ENCODE measurements at regions of chr4 and their contacts with region 1.

Region 1: DNA sequence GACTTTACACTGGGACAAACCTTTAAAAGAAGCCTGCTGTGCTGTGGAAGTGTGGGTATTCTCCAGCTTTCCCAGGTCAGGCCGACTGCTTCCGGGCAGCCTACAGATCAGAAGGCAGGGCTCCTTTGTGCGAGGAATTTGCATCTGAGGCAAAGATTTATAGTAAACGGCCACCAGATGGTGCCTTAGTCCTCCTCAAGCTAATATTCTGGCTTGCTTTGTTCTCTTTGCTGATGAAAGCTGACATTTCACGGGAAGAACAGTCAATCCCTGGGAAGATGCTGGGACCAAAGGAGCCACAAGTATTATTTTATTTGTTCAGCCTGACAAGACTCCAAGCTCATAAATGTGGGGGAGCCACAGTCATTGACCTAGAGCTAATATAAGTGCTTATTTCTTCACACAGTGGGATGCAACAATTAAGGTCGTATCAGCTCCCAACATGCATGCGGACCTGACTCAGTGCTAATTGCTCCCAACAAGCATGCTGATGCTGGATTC is 120.7 kb upstream of the TRIM2 start:
- DNase-seq: peak in 8 of 9 experiments; percentile 14 to 82 (median 47)
- ATAC-seq: peak; percentile 42
- H3K4me3 ChIP-seq: no peak overlapping the region
- H3K4me3 Mint-ChIP-seq: no peak overlapping the region
- H3K27ac ChIP-seq: no peak overlapping the region
- H3K27ac Mint-ChIP-seq: no peak overlapping the region
- H3K4me1 ChIP-seq: peaks cover 57% of the 10 kb centered on the region
- H3K4me1 Mint-ChIP-seq: peaks cover 46% of the 10 kb centered on the region
- H3K27me3 ChIP-seq: no peaks in the 10 kb centered on the region
- H3K27me3 Mint-ChIP-seq: no peaks in the 10 kb centered on the region
- CTCF ChIP-seq: peak; percentile 77

Region 2: DNA sequence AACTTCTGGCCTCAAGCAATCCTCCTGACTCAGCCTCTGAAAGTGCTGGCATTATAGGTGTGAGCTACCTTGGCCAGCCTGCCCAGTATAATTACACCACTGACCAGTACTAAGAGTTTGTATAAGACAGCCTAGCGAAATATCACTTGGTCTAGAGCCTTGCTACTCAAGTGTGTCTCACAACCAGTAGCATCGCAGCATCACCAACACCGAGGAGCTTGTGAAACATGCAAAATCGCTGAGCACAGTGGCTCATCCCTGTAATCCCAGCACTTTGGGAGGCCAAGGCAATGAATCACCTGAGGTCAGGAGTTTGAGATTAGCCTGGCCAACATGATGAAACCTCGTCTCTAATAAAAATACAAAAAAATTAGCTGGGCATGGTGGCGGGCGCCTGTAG is 1220.7 kb before region 1 on chr4:
- CTCF ChIA-PET with region 1: no interaction called
- POLR2A ChIA-PET with region 1: no interaction called
- intact Hi-C with region 1: no loop called
- DNase-seq: no peak
- ATAC-seq: no peak
- H3K4me3 ChIP-seq: no peak overlapping the region
- H3K4me3 Mint-ChIP-seq: no peak overlapping the region
- H3K27ac ChIP-seq: no peak overlapping the region
- H3K27ac Mint-ChIP-seq: no peak overlapping the region
- H3K4me1 ChIP-seq: no peaks in the 10 kb centered on the region
- H3K4me1 Mint-ChIP-seq: peaks cover 12% of the 10 kb centered on the region
- H3K27me3 ChIP-seq: no peaks in the 10 kb centered on the region
- H3K27me3 Mint-ChIP-seq: no peaks in the 10 kb centered on the region
- CTCF ChIP-seq: no peak

Region 3: DNA sequence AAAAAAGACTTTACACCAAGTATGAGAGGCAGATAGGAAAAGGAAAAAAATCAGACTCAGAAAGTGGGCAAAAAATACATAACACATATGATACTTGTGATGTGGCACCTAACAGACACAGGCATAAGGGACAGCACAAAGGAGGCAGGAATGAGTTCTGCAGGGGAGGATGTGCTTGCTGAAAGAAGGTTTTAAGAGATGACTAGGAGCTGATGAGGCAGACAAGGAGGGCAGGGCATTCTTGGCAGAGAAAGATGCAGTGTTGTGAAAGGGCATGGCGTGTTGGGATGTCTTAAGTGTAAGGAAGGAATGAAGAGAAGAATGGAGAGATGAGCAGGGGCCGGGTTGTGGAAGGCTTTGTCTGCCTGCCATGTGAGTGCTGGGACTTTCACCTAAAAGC is 354.0 kb before region 1 on chr4:
- CTCF ChIA-PET with region 1: no interaction called
- POLR2A ChIA-PET with region 1: no interaction called
- intact Hi-C with region 1: no loop called
- DNase-seq: no peak
- ATAC-seq: no peak
- H3K4me3 ChIP-seq: no peak overlapping the region
- H3K4me3 Mint-ChIP-seq: no peak overlapping the region
- H3K27ac ChIP-seq: no peak overlapping the region
- H3K27ac Mint-ChIP-seq: no peak overlapping the region
- H3K4me1 ChIP-seq: no peaks in the 10 kb centered on the region
- H3K4me1 Mint-ChIP-seq: no peaks in the 10 kb centered on the region
- H3K27me3 ChIP-seq: no peaks in the 10 kb centered on the region
- H3K27me3 Mint-ChIP-seq: peaks cover 2% of the 10 kb centered on the region
- CTCF ChIP-seq: no peak

Region 4: GRCh38 chr4:152850377-152850776 is 233.1 kb before region 1 on chr4:
- CTCF ChIA-PET with region 1: interaction called, 67 read pairs
- POLR2A ChIA-PET with region 1: interaction called, 4 read pairs
- intact Hi-C with region 1: loop called (anchors 1 kb)
- DNase-seq: peak in 7 of 9 experiments; percentile 18 to 57 (median 33)
- ATAC-seq: peak; percentile 69
- H3K4me3 ChIP-seq: no peak overlapping the region
- H3K4me3 Mint-ChIP-seq: no peak overlapping the region
- H3K27ac ChIP-seq: no peak overlapping the region
- H3K27ac Mint-ChIP-seq: no peak overlapping the region
- H3K4me1 ChIP-seq: peaks cover 4% of the 10 kb centered on the region
- H3K4me1 Mint-ChIP-seq: peaks cover 24% of the 10 kb centered on the region
- H3K27me3 ChIP-seq: no peaks in the 10 kb centered on the region
- H3K27me3 Mint-ChIP-seq: no peaks in the 10 kb centered on the region
- CTCF ChIP-seq: no peak

Region 5: DNA sequence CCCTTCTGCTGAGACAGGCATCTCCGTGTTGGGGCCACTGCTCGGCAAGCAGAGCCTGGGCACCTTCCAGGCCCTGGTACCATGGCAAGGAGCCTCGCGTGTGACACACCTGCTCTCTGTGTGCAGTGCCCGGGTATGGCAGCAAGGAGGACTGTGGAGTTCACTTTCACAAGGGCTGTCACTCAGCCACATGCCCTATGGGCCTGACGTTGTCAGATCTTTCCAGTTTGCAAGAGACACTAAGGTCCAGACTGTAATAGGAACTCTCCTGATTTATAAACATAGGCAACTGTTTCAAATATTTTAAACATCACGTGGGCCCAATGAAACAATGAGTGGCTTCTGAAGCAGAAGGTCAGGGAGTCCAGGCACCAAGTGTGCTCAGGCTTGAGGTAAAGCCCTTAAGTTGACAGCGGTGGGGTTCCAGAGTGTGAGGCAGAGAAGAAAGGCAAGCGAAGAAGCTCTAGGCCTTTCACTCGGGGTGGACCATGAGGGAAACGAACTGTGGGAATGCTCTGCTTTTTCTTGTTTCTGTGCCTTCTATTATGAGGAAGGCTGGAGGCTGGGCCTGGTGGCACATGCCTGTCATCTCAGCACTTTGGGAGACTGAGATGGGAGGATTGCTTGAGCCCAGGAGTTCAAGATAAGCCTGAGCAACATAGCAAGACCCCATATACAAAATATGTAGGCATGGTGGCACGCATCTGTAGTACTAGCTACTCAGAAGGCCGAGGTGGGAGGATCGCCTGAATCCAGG is 12.1 kb after region 1 on chr4:
- CTCF ChIA-PET with region 1: interaction called, 107 read pairs
- POLR2A ChIA-PET with region 1: interaction called, 3 read pairs
- intact Hi-C with region 1: no loop called
- DNase-seq: no peak
- ATAC-seq: no peak
- H3K4me3 ChIP-seq: no peak overlapping the region
- H3K4me3 Mint-ChIP-seq: no peak overlapping the region
- H3K27ac ChIP-seq: no peak overlapping the region
- H3K27ac Mint-ChIP-seq: no peak overlapping the region
- H3K4me1 ChIP-seq: peaks cover 4% of the 10 kb centered on the region
- H3K4me1 Mint-ChIP-seq: peaks cover 4% of the 10 kb centered on the region
- H3K27me3 ChIP-seq: no peaks in the 10 kb centered on the region
- H3K27me3 Mint-ChIP-seq: no peaks in the 10 kb centered on the region
- CTCF ChIP-seq: no peak

Region 6: DNA sequence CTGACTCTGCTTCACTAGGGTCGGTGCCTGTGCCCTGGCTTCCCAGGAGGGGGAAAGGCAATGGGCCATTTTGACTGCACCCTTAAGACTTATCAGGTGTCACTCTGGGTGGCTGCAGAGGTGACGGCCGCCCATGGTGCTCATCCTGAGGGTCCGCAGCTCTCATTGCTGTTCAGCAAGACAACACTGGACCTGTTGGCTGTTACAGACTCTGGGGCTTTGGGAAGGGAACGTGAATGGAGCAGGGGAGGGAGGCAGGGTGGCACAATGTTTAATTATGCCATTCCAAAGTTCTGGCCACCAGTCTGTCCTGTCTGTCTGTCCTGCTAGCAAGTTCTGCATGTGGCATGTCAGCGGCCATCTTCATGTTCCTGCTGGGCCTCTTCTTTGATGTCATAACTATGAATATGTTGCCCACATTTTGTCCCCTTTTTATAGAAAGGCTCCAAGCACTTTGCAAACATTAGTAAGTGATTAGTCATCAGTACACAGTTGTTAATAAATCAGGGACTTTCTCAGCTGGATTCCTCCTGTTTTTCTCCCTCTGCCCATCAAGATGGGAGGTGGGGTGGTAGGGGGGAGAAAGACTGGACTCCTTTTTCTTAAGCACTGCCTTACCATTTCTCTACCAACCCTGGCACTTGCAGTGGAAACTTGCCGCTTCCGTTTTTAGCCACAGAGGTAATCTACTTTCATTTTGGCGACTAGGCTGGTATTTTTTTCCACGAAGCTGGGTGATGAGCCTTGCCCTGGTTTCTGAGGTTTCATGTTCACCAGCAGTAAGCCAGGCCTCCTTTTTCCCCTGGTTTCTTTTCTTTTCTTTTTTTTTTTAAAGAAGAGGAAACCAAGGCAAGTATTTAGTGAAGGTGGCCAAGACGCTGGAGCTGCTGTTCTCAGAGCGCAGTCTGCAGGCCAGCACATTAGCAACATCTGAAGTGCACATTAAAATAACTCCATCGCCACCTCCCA is 32.1 kb after region 1 on chr4:
- CTCF ChIA-PET with region 1: interaction called, 467 read pairs
- POLR2A ChIA-PET with region 1: interaction called, 6 read pairs
- intact Hi-C with region 1: loop called in 1 of 2 experiments (anchors 1 kb)
- DNase-seq: peak; percentile 41 to 92 (median 76)
- ATAC-seq: peak; percentile 52
- H3K4me3 ChIP-seq: peak overlapping the region in 1 of 2 experiments; percentile 31
- H3K4me3 Mint-ChIP-seq: no peak overlapping the region
- H3K27ac ChIP-seq: peak overlapping the region; percentile 58 to 78
- H3K27ac Mint-ChIP-seq: no peak overlapping the region
- H3K4me1 ChIP-seq: peaks cover 64% of the 10 kb centered on the region
- H3K4me1 Mint-ChIP-seq: peaks cover 9% of the 10 kb centered on the region
- H3K27me3 ChIP-seq: no peaks in the 10 kb centered on the region
- H3K27me3 Mint-ChIP-seq: no peaks in the 10 kb centered on the region
- CTCF ChIP-seq: no peak

Region 7: DNA sequence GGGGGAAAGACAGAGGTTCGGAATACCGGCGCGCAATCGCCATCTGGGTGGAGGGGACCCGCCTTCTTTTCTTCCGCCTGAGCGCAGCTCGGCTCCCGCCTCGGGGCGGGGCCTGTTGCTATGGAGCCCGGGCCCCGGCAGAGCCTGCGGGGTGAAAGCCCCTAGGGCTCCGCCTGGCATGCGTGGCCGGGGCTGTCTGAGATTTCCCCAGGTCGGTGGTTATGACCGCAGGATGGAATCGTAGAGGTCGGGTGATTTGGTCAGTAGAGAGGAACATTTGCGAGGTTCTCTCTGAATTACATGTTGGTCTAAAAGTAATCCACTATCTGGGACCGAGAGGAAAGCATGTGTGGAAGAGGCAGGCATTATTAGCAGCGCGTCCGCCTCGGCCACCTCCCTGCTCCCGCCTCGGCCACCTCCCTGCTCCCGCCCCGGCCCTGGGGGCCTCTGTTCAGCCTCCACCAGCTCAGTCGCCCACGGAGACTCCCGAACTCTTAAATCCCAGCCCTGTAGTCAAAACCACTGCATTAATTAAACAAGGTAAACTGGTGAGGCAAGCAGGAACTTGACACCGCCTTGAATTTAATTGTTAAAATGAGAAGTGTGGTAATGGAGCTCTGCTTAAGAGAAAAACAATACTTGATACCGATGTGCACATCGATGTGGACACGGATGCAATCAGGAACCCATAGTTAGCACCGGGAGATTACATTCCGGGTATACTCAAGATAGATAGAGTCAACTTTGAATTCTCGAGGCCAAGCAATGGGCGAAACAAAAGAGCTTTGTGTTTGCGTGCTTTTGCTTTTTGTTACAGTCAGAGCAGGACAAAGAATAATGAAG is 165.9 kb after region 1 on chr4:
- CTCF ChIA-PET with region 1: interaction called, 4 read pairs
- POLR2A ChIA-PET with region 1: no interaction called
- intact Hi-C with region 1: loop called in 1 of 2 experiments (anchors 5 kb)
- DNase-seq: peak; percentile 59 to 94 (median 81)
- ATAC-seq: peak; percentile 98
- H3K4me3 ChIP-seq: peak overlapping the region; percentile 53 to 57
- H3K4me3 Mint-ChIP-seq: peak overlapping the region; percentile 89
- H3K27ac ChIP-seq: peak overlapping the region; percentile 46 to 60
- H3K27ac Mint-ChIP-seq: peak overlapping the region; percentile 85
- H3K4me1 ChIP-seq: peaks cover 11% of the 10 kb centered on the region
- H3K4me1 Mint-ChIP-seq: peaks cover 20% of the 10 kb centered on the region
- H3K27me3 ChIP-seq: no peaks in the 10 kb centered on the region
- H3K27me3 Mint-ChIP-seq: no peaks in the 10 kb centered on the region
- CTCF ChIP-seq: no peak

Region 8: GRCh38 chr4:153318696-153319320 is 235.3 kb after region 1 on chr4:
- CTCF ChIA-PET with region 1: interaction called, 4 read pairs
- POLR2A ChIA-PET with region 1: no interaction called
- intact Hi-C with region 1: loop called (anchors 1 to 5 kb)
- DNase-seq: peak in 3 of 9 experiments; percentile 6 to 53 (median 35)
- ATAC-seq: no peak
- H3K4me3 ChIP-seq: no peak overlapping the region
- H3K4me3 Mint-ChIP-seq: no peak overlapping the region
- H3K27ac ChIP-seq: no peak overlapping the region
- H3K27ac Mint-ChIP-seq: no peak overlapping the region
- H3K4me1 ChIP-seq: no peaks in the 10 kb centered on the region
- H3K4me1 Mint-ChIP-seq: no peaks in the 10 kb centered on the region
- H3K27me3 ChIP-seq: peaks cover 0 to 2% of the 10 kb centered on the region in 2 experiments
- H3K27me3 Mint-ChIP-seq: no peaks in the 10 kb centered on the region
- CTCF ChIP-seq: no peak

Measured in CD8-positive, alpha-beta T cell (primary cell).